ENCODE measurements at regions of chr3 and their contacts with region 1.

Region 1: DNA sequence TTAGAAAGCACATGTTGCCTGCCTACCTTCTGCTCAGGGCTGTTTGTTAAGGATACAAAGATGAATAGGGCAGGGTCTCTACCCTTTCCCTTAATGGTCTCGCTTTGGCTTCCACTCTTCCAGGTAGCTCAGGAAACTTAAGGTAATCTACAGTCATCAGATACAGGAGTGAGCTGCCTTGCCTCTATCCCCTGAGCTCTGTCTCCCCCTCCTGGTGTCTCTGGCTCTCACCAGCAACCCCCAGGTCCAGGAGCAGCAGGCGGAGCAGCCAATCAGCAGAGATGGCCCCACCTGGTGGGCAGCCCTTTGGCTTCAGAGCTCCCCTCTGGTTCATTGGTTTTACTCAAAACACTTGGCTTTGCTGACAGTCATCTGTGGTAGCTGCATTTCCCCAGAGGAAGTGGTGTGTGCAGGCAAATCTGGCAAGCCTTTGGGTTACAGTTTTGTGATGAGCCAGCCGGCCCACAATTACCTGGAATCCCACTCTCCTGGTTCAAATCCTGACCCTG is 8.5 kb upstream of the CX3CR1 start:
- DNase-seq: peak; percentile 91
- H3K4me3 Mint-ChIP-seq: no peak overlapping the region
- H3K27ac Mint-ChIP-seq: no peak overlapping the region
- H3K4me1 Mint-ChIP-seq: peaks cover 22% of the 10 kb centered on the region
- H3K27me3 Mint-ChIP-seq: no peaks in the 10 kb centered on the region
- CTCF ChIP-seq: peak; percentile 85

Region 2: DNA sequence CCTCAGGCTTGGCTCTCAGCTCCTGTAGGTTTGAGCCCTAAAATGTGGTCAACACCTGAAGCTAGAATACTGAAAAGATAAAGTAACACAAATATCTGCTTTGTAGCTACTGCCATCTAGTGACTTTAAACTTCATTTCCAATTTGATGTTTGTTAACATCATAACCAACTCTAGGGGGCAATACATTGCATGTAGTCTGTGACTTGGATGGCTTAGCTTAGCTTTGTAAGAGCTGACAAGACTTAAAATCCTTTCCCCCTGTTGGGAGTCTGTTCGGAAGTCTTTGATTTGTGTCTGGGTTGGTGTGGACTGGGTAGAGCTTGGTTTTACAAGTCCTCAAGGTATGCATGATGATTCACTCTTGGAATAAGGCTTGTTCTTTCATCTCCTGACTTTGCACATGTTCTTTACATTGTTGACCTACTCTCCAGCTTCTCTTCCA is 288.3 kb before region 1 on chr3:
- CTCF ChIA-PET with region 1: interaction called, 14 read pairs
- intact Hi-C with region 1: loop called (anchors 2 kb)
- DNase-seq: no peak
- H3K4me3 Mint-ChIP-seq: no peak overlapping the region
- H3K27ac Mint-ChIP-seq: no peak overlapping the region
- H3K4me1 Mint-ChIP-seq: peaks cover 7% of the 10 kb centered on the region
- H3K27me3 Mint-ChIP-seq: peaks cover 29% of the 10 kb centered on the region
- CTCF ChIP-seq: peak; percentile 48

Region 3: GRCh38 chr3:39107388-39108199 is 180.8 kb before region 1 on chr3 and contains the starts of genes GORASP1 and TTC21A:
- CTCF ChIA-PET with region 1: interaction called, 10 read pairs
- intact Hi-C with region 1: no loop called
- DNase-seq: peak; percentile 69
- H3K4me3 Mint-ChIP-seq: peak within 1 kb of the TSS; percentile 92
- H3K27ac Mint-ChIP-seq: peak within 1 kb of the TSS; percentile 73
- H3K4me1 Mint-ChIP-seq: peaks cover 45% of the 10 kb centered on the region
- H3K27me3 Mint-ChIP-seq: no peaks in the 10 kb centered on the region
- CTCF ChIP-seq: no peak
- total RNA-seq, gene GORASP1: 54.8 and 58.6 TPM in 2 replicates
- total RNA-seq, gene TTC21A: 8.1 and 9.1 TPM in 2 replicates

Region 4: DNA sequence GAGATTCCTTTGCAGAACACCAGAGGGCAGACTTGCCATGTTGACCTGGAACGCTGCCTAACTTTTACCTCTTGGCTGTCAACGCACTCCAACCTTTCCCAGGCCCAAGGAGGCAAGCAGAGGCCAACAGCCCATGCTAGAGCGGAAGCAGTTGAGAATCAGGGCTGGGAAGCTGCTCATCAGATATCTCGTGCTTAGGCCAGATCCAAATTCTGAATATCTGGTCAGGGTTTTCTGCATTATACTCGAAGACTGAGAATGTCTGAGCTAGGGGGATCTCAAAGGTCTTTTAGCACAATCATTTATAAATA is 98.4 kb before region 1 on chr3:
- CTCF ChIA-PET with region 1: interaction called, 35 read pairs
- intact Hi-C with region 1: loop called (anchors 1 kb)
- DNase-seq: peak; percentile 68
- H3K4me3 Mint-ChIP-seq: no peak overlapping the region
- H3K27ac Mint-ChIP-seq: no peak overlapping the region
- H3K4me1 Mint-ChIP-seq: peaks cover 15% of the 10 kb centered on the region
- H3K27me3 Mint-ChIP-seq: no peaks in the 10 kb centered on the region
- CTCF ChIP-seq: no peak

Region 5: DNA sequence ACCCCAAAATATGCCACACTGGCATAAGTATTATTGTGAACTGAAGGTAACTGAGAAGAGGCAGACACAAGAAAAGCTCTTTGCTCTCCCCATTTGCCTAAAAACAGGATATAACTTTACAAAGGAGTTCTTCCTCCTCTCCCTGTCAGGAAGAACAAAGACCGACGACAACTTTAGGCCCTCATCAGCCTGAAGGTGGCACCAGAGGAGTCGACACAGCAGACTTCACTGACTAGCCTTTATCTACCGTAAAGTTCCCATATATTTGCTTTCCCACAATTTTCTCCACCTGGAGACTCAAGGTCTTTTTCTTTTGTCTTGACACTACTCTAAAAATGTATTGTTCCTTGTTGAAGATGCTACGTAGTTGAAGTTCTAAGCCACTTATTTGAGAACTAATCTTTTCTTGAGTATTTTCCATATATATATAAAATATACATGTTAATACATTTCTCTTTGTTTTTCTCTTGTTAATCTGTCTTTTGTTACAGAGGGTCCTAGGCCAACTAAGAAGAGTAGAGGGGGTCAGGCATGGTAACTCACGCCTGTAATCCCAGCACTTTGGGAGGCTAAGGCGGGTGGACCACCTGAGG is 79.8 kb before region 1 on chr3:
- CTCF ChIA-PET with region 1: interaction called, 5 read pairs
- intact Hi-C with region 1: loop called (anchors 5 kb)
- DNase-seq: peak; percentile 55
- H3K4me3 Mint-ChIP-seq: no peak overlapping the region
- H3K27ac Mint-ChIP-seq: no peak overlapping the region
- H3K4me1 Mint-ChIP-seq: no peaks in the 10 kb centered on the region
- H3K27me3 Mint-ChIP-seq: peaks cover 41% of the 10 kb centered on the region
- CTCF ChIP-seq: peak; percentile 32

Region 6: DNA sequence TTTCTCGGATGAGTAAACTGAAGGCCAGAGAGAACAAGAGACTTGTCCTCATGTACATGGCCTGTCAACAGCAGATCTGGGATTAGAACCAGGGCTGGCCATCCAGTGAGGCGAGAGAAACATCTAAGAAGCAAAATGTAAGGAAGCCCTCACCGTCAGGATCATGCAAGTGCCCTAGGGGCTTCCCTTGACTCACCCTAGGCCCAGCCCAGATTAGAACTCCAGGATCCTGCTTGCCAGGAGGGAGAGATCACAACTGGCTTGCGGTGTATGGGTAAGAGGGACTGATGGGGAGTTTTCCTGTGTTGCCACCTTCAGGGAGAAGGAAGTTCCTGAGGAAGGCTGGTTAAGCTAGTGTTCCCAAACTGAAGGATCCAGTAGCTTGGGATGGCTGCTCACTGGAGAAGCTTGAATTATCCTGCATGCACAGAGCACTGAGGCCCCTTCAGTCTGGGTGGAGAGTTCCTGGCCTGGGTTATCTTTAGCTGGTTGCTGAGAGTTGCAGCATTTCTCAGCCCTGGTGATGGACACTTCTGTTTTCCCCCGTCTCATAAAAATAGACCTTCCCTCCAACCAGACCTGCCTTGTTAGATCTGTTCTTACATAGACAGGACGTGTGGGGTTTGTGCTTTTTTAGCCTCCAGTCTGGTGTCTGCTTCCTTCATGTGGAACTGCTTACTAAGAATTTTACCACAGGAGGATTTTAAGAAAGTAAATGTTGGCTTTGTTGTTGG is 67.8 kb before region 1 on chr3:
- CTCF ChIA-PET with region 1: no interaction called
- intact Hi-C with region 1: no loop called
- DNase-seq: no peak
- H3K4me3 Mint-ChIP-seq: no peak overlapping the region
- H3K27ac Mint-ChIP-seq: no peak overlapping the region
- H3K4me1 Mint-ChIP-seq: no peaks in the 10 kb centered on the region
- H3K27me3 Mint-ChIP-seq: peaks cover 90% of the 10 kb centered on the region
- CTCF ChIP-seq: no peak